Esophagus muscularis mucosa (tissue), 4 donors: ENCODE measurements at regions of chr9 and their contacts with region 1.

Region 1: GRCh38 chr9:27529316-27530278 is at the start of gene MOB3B:
- DNase-seq: peak; percentile 94
- H3K4me3 ChIP-seq: peak within 1 kb of the TSS; percentile 73 to 87 (median 84)
- H3K27ac ChIP-seq: peak within 1 kb of the TSS; percentile 92 to 96 (median 95)
- H3K4me1 ChIP-seq: peaks cover 7 to 38% (median 31%) of the 10 kb centered on the region in 4 donors
- H3K27me3 ChIP-seq: no peaks in the 10 kb centered on the region
- CTCF ChIP-seq: peak in 2 of 3 experiments; percentile 94 to 97
- EP300 ChIP-seq: no peak
- POLR2A ChIP-seq: no peak
- total RNA-seq, gene MOB3B: 7.6 to 11.6 (median 9.5) TPM

Region 2: GRCh38 chr9:27333241-27334052 is 196.2 kb before region 1 on chr9:
- intact Hi-C with region 1: loop called (anchors 5 kb)
- DNase-seq: no peak
- H3K4me3 ChIP-seq: no peak overlapping the region
- H3K27ac ChIP-seq: no peak overlapping the region
- H3K4me1 ChIP-seq: peaks cover 11 to 24% (median 18%) of the 10 kb centered on the region in 4 donors
- H3K27me3 ChIP-seq: no peaks in the 10 kb centered on the region
- CTCF ChIP-seq: peak; percentile 92 to 95 (median 94)
- EP300 ChIP-seq: no peak
- POLR2A ChIP-seq: no peak

Region 3: DNA sequence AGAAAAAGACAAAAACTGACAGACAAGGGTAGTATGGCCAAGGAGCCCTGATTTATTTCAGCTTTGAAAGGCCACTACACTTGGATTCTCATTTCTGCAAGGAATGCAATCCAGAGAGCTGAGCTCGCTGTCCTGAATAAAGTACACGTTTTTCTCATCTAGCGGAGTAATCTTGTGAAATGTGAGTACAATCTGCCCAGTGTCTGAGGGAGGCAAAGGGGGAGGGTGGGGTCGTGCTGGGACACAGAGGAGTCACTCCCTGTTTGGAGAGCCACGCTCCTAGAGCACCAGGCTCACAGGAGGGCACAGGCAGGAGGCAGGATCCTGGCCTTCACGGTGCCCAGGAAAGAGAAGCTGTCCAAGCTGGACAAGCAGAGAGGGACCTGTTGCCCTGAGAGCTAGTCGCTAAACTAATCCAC is 56.5 kb before region 1 on chr9:
- intact Hi-C with region 1: loop called (anchors 10 kb)
- DNase-seq: peak; percentile 92
- H3K4me3 ChIP-seq: no peak overlapping the region
- H3K27ac ChIP-seq: peak overlapping the region; percentile 56 to 74 (median 59)
- H3K4me1 ChIP-seq: peaks cover 12 to 48% (median 43%) of the 10 kb centered on the region in 4 donors
- H3K27me3 ChIP-seq: peaks cover 0 to 3% (median 0%) of the 10 kb centered on the region in 4 donors
- CTCF ChIP-seq: no peak
- EP300 ChIP-seq: no peak
- POLR2A ChIP-seq: no peak

Region 4: GRCh38 chr9:27514551-27514950 is 15.0 kb before region 1 on chr9:
- intact Hi-C with region 1: no loop called
- DNase-seq: no peak
- H3K4me3 ChIP-seq: no peak overlapping the region
- H3K27ac ChIP-seq: no peak overlapping the region
- H3K4me1 ChIP-seq: peaks cover 0 to 10% (median 7%) of the 10 kb centered on the region in 4 donors
- H3K27me3 ChIP-seq: no peaks in the 10 kb centered on the region
- CTCF ChIP-seq: no peak
- EP300 ChIP-seq: no peak
- POLR2A ChIP-seq: no peak